A673 (cell line): ENCODE measurements at regions of chr6 and their contacts with region 1.

Region 1: DNA sequence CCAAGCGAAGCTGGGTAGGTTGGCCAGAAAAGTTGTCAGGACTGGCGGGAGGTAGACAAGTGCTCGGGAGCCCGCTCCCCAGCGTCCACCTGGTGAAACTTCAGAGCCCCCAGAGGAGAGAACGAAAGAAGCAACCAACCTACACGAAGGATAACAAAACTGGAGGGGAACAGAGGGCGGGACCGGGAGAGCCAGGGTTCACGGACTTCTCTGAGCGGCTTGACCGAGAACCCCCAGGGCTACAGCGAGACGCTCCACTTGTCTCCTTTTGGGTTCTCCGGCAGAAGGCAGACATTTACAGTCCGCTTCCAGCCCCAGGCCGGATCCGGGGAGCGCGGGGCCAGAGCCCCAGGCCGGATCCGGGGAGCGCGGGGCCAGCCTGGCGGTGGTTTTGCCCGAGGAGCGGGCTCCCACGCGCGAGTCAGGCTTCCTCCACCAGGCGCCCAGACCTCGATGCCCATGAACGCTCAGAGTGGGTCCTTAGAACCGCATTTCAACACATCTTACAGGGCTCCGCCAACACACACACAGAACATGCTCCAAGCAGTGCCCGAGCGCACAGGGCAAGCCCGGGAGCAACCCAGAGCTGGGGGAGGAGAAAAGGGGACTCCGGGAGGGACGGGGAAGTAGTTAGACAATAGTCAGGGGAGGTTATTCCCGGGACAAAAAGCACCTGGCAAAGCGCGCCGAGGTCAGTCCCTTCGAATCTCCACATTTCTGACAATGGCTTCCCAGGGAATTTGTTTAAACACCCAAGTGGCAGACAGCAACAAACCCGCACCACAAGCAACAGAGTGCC is 1.1 kb downstream of the PTPRK start:
- DNase-seq: peak; percentile 62
- H3K4me3 ChIP-seq: peak overlapping the region; percentile 90
- H3K27ac ChIP-seq: peak overlapping the region; percentile 96
- H3K4me1 ChIP-seq: peaks cover 47% of the 10 kb centered on the region
- H3K27me3 ChIP-seq: no peaks in the 10 kb centered on the region
- CTCF ChIP-seq: 0 out of 2 replicates have a peak, but pooled peaks have one; percentile 18

Region 2: GRCh38 chr6:127737009-127737486 is 782.3 kb before region 1 on chr6:
- CTCF ChIA-PET with region 1: interaction called, 3 read pairs
- POLR2A ChIA-PET with region 1: no interaction called
- intact Hi-C with region 1: loop called (anchors 1 kb)
- DNase-seq: peak; percentile 93
- H3K4me3 ChIP-seq: no peak overlapping the region
- H3K27ac ChIP-seq: no peak overlapping the region
- H3K4me1 ChIP-seq: peaks cover 7% of the 10 kb centered on the region
- H3K27me3 ChIP-seq: no peaks in the 10 kb centered on the region
- CTCF ChIP-seq: peak; percentile 72

Region 3: GRCh38 chr6:127855542-127856159 is 663.7 kb before region 1 on chr6:
- CTCF ChIA-PET with region 1: interaction called, 4 read pairs
- POLR2A ChIA-PET with region 1: no interaction called
- intact Hi-C with region 1: loop called (anchors 5 kb)
- DNase-seq: peak; percentile 58
- H3K4me3 ChIP-seq: no peak overlapping the region
- H3K27ac ChIP-seq: no peak overlapping the region
- H3K4me1 ChIP-seq: peaks cover 17% of the 10 kb centered on the region
- H3K27me3 ChIP-seq: no peaks in the 10 kb centered on the region
- CTCF ChIP-seq: peak; percentile 71

Region 4: DNA sequence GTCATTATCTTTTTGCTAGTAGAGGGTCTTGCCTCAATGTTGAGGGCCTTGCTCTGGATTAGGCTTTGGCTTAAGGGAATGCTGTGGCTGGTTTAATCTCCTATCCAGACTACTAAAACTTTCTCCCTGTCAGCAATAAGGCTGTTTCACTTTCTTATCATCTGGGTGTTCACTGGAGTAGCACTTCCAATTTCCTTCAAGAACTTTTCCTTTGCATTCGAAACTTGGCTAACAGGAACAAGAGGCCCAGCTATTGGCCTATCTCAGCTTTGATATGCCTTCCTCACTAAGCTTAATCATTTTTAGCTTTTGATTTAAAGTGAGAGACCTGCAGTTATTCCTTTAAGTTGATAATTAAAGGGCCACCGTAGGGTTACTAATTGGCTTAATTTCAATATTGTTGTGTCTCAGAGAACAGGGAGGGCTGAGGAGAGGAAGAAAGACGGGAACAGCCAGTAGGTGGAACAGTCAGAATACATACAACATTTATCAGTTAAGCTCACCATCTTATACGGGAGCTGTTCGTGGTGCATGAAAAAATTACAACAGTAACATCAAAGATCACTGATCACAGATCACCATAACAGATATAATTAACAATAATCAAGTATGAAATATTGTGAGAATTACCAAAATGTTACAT is 185.6 kb before region 1 on chr6:
- CTCF ChIA-PET with region 1: no interaction called
- POLR2A ChIA-PET with region 1: no interaction called
- intact Hi-C with region 1: loop called (anchors 5 kb)
- DNase-seq: peak; percentile 13
- H3K4me3 ChIP-seq: no peak overlapping the region
- H3K27ac ChIP-seq: no peak overlapping the region
- H3K4me1 ChIP-seq: peaks cover 71% of the 10 kb centered on the region
- H3K27me3 ChIP-seq: no peaks in the 10 kb centered on the region
- CTCF ChIP-seq: no peak

Region 5: GRCh38 chr6:128438393-128438792 is 80.9 kb before region 1 on chr6:
- CTCF ChIA-PET with region 1: interaction called, 7 read pairs
- POLR2A ChIA-PET with region 1: no interaction called
- intact Hi-C with region 1: loop called (anchors 5 kb)
- DNase-seq: peak; percentile 88
- H3K4me3 ChIP-seq: peak overlapping the region; percentile 27
- H3K27ac ChIP-seq: peak overlapping the region; percentile 68
- H3K4me1 ChIP-seq: peaks cover 55% of the 10 kb centered on the region
- H3K27me3 ChIP-seq: no peaks in the 10 kb centered on the region
- CTCF ChIP-seq: no peak

Region 6: GRCh38 chr6:128725271-128726233 is 206.2 kb after region 1 on chr6:
- CTCF ChIA-PET with region 1: interaction called, 3 read pairs
- POLR2A ChIA-PET with region 1: no interaction called
- intact Hi-C with region 1: loop called (anchors 5 kb)
- DNase-seq: peak; percentile 60
- H3K4me3 ChIP-seq: no peak overlapping the region
- H3K27ac ChIP-seq: no peak overlapping the region
- H3K4me1 ChIP-seq: peaks cover 8% of the 10 kb centered on the region
- H3K27me3 ChIP-seq: no peaks in the 10 kb centered on the region
- CTCF ChIP-seq: peak; percentile 81

Region 7: DNA sequence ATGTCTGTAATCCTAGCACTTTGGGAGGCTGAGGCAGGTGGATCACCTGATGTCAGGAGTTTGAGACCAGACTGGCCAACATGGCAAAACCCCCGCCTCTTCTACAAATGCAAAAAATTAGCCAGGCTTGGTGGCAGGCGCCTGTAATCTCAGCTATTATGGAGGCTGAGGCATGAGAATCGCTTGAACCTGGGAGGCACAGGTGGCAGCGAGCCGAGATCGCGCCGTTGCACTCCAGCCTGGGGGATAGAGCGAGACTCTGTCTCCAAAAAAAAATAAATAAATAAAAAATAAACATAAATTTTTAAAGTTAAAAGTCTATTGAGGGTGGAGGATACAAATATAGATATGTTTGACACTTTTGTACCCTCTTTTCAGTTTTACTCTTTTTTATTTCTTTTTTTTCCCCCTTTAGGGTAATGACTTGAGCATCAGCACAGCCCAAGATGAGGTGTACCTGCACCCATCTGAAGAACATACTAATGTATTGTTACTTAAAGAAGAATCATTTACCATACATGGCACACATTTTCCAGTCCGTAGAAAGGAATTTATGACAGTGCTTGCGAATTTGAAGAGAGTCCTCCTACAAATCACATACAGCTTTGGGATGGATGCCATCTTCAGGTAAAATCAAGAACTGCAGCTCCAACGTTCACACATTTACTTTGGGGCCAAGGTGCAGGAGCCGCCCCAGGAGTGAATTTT is 732.5 kb after region 1 on chr6:
- CTCF ChIA-PET with region 1: interaction called, 3 read pairs
- POLR2A ChIA-PET with region 1: no interaction called
- intact Hi-C with region 1: loop called (anchors 10 kb)
- DNase-seq: peak; percentile 83
- H3K4me3 ChIP-seq: no peak overlapping the region
- H3K27ac ChIP-seq: no peak overlapping the region
- H3K4me1 ChIP-seq: peaks cover 7% of the 10 kb centered on the region
- H3K27me3 ChIP-seq: no peaks in the 10 kb centered on the region
- CTCF ChIP-seq: peak; percentile 92